ENCODE measurements at regions of chr2 and their contacts with region 1.

Region 1: GRCh38 chr2:191020221-191020741 is 6.3 kb upstream of the STAT1 start:
- DNase-seq: peak; percentile 27
- H3K4me3 ChIP-seq: peak overlapping the region; percentile 70 to 87 (median 76)
- H3K27ac ChIP-seq: peak overlapping the region; percentile 84 to 95 (median 89)
- H3K4me1 ChIP-seq: peaks cover 0 to 18% (median 8%) of the 10 kb centered on the region in 3 donors
- H3K27me3 ChIP-seq: no peaks in the 10 kb centered on the region
- CTCF ChIP-seq: peak in 4 of 6 experiments; percentile 21 to 44 (median 28)
- POLR2A ChIP-seq: peak in 3 of 4 donors; percentile 57 to 93 (median 61)

Region 2: GRCh38 chr2:190781604-190782198 is 238.6 kb before region 1 on chr2:
- intact Hi-C with region 1: loop called (anchors 10 kb)
- DNase-seq: no peak
- H3K4me3 ChIP-seq: no peak overlapping the region
- H3K27ac ChIP-seq: no peak overlapping the region
- H3K4me1 ChIP-seq: peaks cover 0 to 10% (median 0%) of the 10 kb centered on the region in 3 donors
- H3K27me3 ChIP-seq: peaks cover 0 to 6% (median 0%) of the 10 kb centered on the region in 4 donors
- CTCF ChIP-seq: peak; percentile 33 to 61 (median 58)
- POLR2A ChIP-seq: no peak

Region 3: DNA sequence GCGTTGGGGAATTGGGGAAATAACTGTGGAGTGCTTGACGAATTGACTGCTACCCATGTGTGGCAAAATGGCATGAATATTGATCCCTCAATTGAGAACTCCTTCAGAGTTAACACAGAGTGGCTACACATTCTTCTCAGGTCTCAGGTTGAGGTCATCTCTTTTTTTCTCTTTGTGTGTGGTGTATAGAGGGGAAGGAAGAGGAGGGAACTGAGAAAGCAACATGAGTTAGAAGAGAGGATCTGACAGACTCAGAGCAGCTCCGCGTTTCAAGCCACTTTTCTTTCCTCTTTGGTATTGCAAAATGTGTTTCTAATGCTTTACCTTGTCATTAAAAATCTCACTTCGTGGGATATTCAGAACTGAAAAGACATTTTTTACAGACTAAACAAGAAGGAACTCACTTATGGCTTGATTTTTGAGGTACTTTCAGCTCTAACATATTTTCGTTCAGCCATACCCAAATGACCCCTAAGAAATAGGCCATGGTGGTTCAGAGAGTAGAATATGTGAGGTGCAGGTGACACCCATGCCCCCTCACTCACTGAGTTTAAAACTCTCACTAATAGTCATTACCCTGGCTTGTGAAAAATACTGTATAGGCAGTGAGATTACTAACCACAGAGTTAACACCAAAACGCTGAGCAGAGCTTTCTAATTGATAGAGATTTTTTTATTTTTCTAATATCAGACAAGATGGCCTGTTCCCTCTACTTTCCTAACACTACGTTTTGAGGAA is 108.1 kb after region 1 on chr2:
- intact Hi-C with region 1: no loop called
- DNase-seq: no peak
- H3K4me3 ChIP-seq: no peak overlapping the region
- H3K27ac ChIP-seq: peak overlapping the region in 1 of 4 donors; percentile 33
- H3K4me1 ChIP-seq: no peaks in the 10 kb centered on the region
- H3K27me3 ChIP-seq: no peaks in the 10 kb centered on the region
- CTCF ChIP-seq: no peak
- POLR2A ChIP-seq: no peak